Aorta (tissue), 5 donors: ENCODE measurements at regions of chr7 and their contacts with region 1.

Region 1: DNA sequence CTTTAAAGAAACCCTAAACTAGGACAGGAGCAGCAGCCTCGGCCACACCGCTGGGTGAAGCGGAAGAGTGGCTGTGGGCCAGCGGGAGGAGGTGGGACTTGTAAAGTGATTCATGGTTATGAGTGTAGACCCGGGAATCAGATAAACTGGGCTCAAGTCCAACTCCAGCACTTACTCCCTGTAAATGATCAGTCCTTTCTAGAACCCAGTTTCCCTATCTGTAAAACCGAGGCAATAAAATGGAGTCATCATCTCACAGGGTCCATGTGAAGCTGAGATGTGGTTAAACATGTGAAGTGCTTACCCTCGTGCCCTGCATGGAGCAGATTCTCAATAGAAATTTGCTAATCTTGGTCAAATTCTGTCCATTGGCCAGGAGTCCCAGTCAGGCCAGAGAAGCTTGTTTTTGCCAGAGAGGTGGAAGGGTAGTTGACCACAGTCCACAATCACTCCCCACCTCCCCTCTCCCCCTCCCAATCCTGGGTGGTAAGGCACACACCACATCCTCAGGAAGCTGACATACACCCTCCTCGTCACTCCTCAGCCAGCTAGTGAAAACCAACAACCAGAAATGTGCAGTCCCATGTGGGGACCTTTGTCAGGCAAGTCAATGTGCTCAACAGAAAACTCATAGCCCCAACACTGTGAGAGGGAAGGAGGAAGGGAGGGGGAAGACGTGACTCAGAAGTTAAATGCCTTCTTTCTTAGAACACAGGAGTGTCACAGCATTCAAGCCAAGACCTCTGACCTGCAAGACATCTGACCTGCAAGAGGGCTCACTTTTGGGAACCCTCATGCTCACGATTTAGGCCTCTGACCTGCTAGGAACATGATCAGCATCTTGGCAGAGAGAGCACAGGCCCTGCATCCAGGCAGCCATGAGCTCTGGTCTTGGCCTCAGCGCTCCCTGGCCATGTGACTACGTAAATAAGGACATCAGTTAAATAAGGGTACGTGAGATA is 145.1 kb downstream of the PLXNA4 start:
- DNase-seq: peak; percentile 80 to 90
- ATAC-seq: no peak
- H3K4me3 ChIP-seq: no peak overlapping the region
- H3K27ac ChIP-seq: peak overlapping the region in 1 of 2 donors; percentile 12
- H3K4me1 ChIP-seq: peaks cover 0 to 10% of the 10 kb centered on the region in 2 donors
- H3K27me3 ChIP-seq: no peaks in the 10 kb centered on the region

Region 2: GRCh38 chr7:132472463-132473120 is 41.5 kb after region 1 on chr7:
- intact Hi-C with region 1: loop called in 1 of 2 experiments (anchors 5 kb)
- DNase-seq: peak; percentile 80
- ATAC-seq: peak; percentile 92
- H3K4me3 ChIP-seq: no peak overlapping the region
- H3K27ac ChIP-seq: peak overlapping the region; percentile 39 to 51
- H3K4me1 ChIP-seq: peaks cover 0 to 3% of the 10 kb centered on the region in 2 donors
- H3K27me3 ChIP-seq: no peaks in the 10 kb centered on the region

Region 3: DNA sequence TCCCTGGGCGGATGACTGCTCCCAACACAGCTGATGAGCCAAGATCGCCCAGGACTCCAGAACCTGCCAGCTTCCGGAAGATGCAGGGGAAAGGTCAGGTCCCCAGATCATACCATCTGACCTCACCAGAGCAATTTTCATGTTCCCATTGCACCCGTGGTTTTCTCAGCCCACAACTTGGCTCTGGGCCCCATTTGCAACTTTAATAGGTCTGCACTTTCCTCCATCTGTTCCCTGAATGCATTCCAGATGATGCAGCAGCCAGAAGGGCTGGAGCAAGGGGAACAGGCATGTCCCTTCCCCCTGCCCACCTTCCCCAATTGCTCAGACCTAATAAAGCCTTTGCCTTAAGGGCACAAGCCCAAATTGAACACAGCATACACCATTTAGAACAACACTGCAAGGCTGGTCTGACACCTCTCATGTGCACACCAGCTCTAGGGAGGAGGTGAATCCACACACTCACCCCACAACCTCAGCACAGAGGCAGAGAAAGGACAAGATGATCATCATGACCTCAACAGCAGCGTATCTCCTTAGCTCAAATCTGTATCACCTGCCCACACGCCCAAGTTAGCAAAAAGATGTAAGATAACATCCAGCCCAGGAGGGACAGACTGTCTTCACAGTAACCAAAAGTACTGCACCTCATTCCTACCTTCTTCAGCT is 57.6 kb after region 1 on chr7:
- intact Hi-C with region 1: no loop called
- DNase-seq: peak in 1 of 2 donors; percentile 44
- ATAC-seq: no peak
- H3K4me3 ChIP-seq: no peak overlapping the region
- H3K27ac ChIP-seq: no peak overlapping the region
- H3K4me1 ChIP-seq: no peaks in the 10 kb centered on the region
- H3K27me3 ChIP-seq: no peaks in the 10 kb centered on the region

Region 4: GRCh38 chr7:132683896-132684686 is 252.9 kb after region 1 on chr7:
- intact Hi-C with region 1: no loop called
- DNase-seq: no peak
- ATAC-seq: no peak
- H3K4me3 ChIP-seq: no peak overlapping the region
- H3K27ac ChIP-seq: no peak overlapping the region
- H3K4me1 ChIP-seq: no peaks in the 10 kb centered on the region
- H3K27me3 ChIP-seq: no peaks in the 10 kb centered on the region